GM12878 (cell line): ENCODE measurements at regions of chr15 and their contacts with region 1.

Region 1: DNA sequence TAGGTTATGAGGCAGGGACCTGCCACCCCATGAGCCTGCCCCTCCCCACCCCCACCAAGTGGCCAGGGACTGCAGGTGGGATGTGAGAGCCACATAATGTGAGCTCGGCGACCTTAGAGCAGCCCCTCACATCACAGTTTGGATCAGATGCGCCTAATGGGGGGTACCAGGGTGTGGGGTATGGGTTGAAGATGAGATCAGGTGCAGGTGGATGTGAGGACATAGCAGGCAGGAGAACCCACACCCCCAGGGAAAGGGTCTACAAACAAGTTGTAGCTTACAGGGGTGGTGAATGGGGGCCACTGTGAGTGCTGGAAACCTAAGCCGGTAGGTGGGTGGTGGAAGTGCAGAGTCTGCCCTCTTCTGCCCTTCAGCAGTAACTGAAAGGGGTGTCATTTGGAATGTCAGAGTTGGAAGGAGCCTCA is 94.0 kb downstream of the CORO2B start:
- DNase-seq: no peak
- ATAC-seq: no peak
- H3K4me3 ChIP-seq: no peak overlapping the region
- H3K27ac ChIP-seq: no peak overlapping the region
- H3K4me1 ChIP-seq: peaks cover 6% of the 10 kb centered on the region
- H3K27me3 ChIP-seq: no peaks in the 10 kb centered on the region; a peak in 1 of 4 replicates
- CTCF ChIP-seq: no peak; a peak in 1 of 6 replicates
- EP300 ChIP-seq: no peak
- POLR2A ChIP-seq: no peak
- RAD21 ChIP-seq: no peak

Region 2: GRCh38 chr15:68559345-68560310 is 113.2 kb before region 1 on chr15:
- CTCF ChIA-PET with region 1: interaction called, 32 read pairs
- POLR2A ChIA-PET with region 1: no interaction called
- RAD21 ChIA-PET with region 1: interaction called, 29 read pairs
- SMC1A ChIA-PET with region 1: interaction called, 13 read pairs
- in situ Hi-C with region 1: loop called (anchors 5 kb)
- intact Hi-C with region 1: loop called (anchors 1 kb)
- DNase-seq: no peak
- ATAC-seq: peak; percentile 96
- H3K4me3 ChIP-seq: no peak overlapping the region
- H3K27ac ChIP-seq: no peak overlapping the region
- H3K4me1 ChIP-seq: no peaks in the 10 kb centered on the region
- H3K27me3 ChIP-seq: peaks cover 0 to 3% of the 10 kb centered on the region in 2 experiments; a peak in 2 of 4 replicates
- CTCF ChIP-seq: peak; percentile 85 to 93 (median 89)
- EP300 ChIP-seq: no peak
- POLR2A ChIP-seq: no peak
- RAD21 ChIP-seq: peak; percentile 52

Region 3: GRCh38 chr15:68650901-68651709 is 21.7 kb before region 1 on chr15:
- CTCF ChIA-PET with region 1: interaction called, 33 read pairs
- POLR2A ChIA-PET with region 1: no interaction called
- RAD21 ChIA-PET with region 1: interaction called, 3 read pairs
- SMC1A ChIA-PET with region 1: no interaction called
- in situ Hi-C with region 1: no loop called
- intact Hi-C with region 1: no loop called
- DNase-seq: no peak
- ATAC-seq: peak; percentile 87
- H3K4me3 ChIP-seq: no peak overlapping the region
- H3K27ac ChIP-seq: no peak overlapping the region
- H3K4me1 ChIP-seq: no peaks in the 10 kb centered on the region
- H3K27me3 ChIP-seq: peaks cover 3 to 9% of the 10 kb centered on the region in 2 experiments
- CTCF ChIP-seq: peak; percentile 44 to 82 (median 65)
- EP300 ChIP-seq: no peak
- POLR2A ChIP-seq: no peak
- RAD21 ChIP-seq: peak; percentile 20; the same call in 1 of the 2 replicates

Region 4: DNA sequence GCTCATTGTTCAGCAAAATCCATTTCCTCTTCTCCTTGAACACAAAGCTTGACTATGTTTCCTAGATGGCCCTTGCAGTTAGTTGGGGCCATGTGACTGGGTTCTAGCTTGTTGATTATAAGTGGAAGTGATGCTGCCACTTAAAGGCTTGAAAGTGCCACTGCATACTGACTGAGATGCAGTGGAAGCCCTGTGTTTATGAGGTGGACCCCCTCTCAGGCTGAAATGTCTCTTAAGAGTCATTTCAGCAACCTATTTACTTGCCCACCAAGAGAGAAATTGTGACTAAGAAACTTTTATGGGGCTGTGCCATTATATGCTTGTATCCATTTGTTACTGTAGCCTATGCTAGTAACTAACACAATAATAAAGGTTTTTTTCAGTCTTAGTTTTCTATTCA is 156.3 kb after region 1 on chr15:
- CTCF ChIA-PET with region 1: interaction called, 14 read pairs
- POLR2A ChIA-PET with region 1: interaction called, 4 read pairs
- RAD21 ChIA-PET with region 1: interaction called, 8 read pairs
- SMC1A ChIA-PET with region 1: interaction called, 3 read pairs
- in situ Hi-C with region 1: no loop called
- intact Hi-C with region 1: no loop called
- DNase-seq: no peak
- ATAC-seq: peak; percentile 97
- H3K4me3 ChIP-seq: no peak overlapping the region
- H3K27ac ChIP-seq: no peak overlapping the region
- H3K4me1 ChIP-seq: no peaks in the 10 kb centered on the region; the same call in 1 of the 2 replicates
- H3K27me3 ChIP-seq: no peaks in the 10 kb centered on the region
- CTCF ChIP-seq: peak; percentile 64 to 78 (median 72); a peak in 5 of 6 replicates
- EP300 ChIP-seq: no peak
- POLR2A ChIP-seq: no peak
- RAD21 ChIP-seq: peak; percentile 77